OCI-LY7 (cell line): ENCODE measurements at regions of chr15 and their contacts with region 1.

Region 1: DNA sequence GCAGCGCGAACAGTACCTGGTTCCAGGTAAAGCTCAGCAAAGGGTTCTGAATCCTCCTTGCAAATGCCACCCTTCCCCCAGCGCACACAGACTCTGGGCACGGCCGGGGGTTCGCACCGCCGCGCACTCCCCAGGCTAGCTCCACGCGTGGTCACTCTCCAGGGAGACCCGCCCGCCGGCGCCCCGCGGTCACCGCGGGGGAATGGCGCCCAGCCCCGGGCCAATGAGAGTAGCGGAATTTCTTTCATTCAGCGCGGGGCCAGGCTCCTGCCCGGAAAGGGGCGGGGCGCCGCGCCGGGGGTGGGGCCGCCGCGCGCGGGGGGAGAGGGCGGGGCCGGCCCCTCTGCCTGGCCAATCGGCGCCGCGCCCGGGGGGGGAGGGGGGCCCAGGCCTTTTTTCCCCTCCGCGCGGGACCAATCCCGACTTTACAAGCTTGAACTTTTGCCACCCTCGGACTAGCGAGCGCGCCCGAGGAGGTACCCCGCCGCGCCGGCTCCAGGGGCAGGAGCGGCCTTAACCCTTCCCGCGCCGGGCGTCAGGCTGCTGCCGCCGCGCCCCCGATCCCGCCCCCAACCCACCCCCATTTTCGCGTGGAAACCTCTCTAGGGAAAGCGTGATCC is 1.1 kb upstream of the SMAD6 start:
- DNase-seq: peak; percentile 96
- H3K4me3 ChIP-seq: peak overlapping the region; percentile 77
- H3K27ac ChIP-seq: peak overlapping the region; percentile 84
- H3K4me1 ChIP-seq: peaks cover 38% of the 10 kb centered on the region
- CTCF ChIP-seq: no peak

Region 2: GRCh38 chr15:66504563-66505429 is 196.1 kb before region 1 on chr15 and contains the starts of genes RPL4 and ZWILCH:
- CTCF ChIA-PET with region 1: no interaction called
- POLR2A ChIA-PET with region 1: no interaction called
- intact Hi-C with region 1: loop called (anchors 10 kb)
- DNase-seq: peak; percentile 91
- H3K4me3 ChIP-seq: peak within 1 kb of the TSS; percentile 100
- H3K27ac ChIP-seq: peak within 1 kb of the TSS; percentile 85
- H3K4me1 ChIP-seq: peaks cover 53% of the 10 kb centered on the region
- CTCF ChIP-seq: no peak
- total RNA-seq, gene RPL4: 5,185 and 5,381 TPM in 2 replicates
- total RNA-seq, gene ZWILCH: 36.9 and 37.4 TPM in 2 replicates

Region 3: GRCh38 chr15:66714543-66714981 is 13.7 kb after region 1 on chr15:
- CTCF ChIA-PET with region 1: interaction called, 3 read pairs
- POLR2A ChIA-PET with region 1: interaction called, 16 read pairs
- intact Hi-C with region 1: loop called (anchors 1 kb)
- DNase-seq: no peak
- H3K4me3 ChIP-seq: peak overlapping the region; percentile 60
- H3K27ac ChIP-seq: peak overlapping the region; percentile 94
- H3K4me1 ChIP-seq: peaks cover 73% of the 10 kb centered on the region
- CTCF ChIP-seq: no peak

Region 4: GRCh38 chr15:66838671-66839239 is 137.8 kb after region 1 on chr15:
- CTCF ChIA-PET with region 1: no interaction called
- POLR2A ChIA-PET with region 1: no interaction called
- intact Hi-C with region 1: loop called (anchors 5 kb)
- DNase-seq: peak; percentile 56
- H3K4me3 ChIP-seq: no peak overlapping the region
- H3K27ac ChIP-seq: no peak overlapping the region
- H3K4me1 ChIP-seq: peaks cover 25% of the 10 kb centered on the region
- CTCF ChIP-seq: peak; percentile 83